ENCODE measurements at regions of chr16 and their contacts with region 1.

Region 1: DNA sequence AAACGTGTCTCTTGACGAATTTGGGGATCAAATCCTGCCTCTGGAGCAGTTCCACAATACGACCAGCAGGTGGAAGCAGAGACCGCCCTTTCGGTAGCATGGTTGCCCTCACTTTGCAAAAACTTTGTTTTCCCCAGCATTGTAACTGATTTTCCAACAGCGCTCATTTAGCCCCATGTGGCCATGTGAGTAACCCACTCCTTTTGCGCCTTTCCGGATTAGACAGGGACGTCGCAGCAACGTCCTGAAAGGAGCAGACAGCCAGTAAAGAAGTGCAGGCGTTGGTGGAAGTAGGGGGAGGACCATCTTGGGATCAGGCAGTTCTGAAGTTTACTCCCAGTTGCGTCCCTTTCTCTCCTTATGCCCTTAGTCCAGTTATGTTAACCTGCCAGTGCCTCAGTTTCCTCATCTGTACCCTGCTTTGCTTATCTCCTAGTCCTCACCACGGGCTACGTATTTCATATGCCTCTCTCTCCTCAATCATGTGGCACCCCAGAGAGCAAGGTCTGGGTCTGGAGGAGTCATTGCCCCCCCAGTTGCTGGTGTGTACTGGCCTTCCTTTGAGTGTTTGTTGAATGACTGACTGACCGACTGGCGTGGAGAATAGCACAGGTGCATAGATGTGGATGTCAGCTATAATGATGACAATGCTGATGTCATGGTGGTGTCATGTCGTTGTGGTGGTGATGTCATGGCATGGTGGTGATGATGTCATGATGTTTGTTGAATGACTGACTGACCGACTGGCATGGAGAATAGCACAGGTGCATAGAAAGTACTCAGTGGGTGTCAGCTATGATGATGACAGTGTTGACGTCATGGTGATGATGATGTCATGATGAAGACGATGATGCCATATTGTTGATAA is 22.3 kb downstream of the TMEM114 start:
- DNase-seq: peak; percentile 49 to 86 (median 73)
- ATAC-seq: peak; percentile 97
- H3K4me3 ChIP-seq: no peak overlapping the region
- H3K4me3 Mint-ChIP-seq: no peak overlapping the region
- H3K27ac ChIP-seq: no peak overlapping the region
- H3K27ac Mint-ChIP-seq: no peak overlapping the region
- H3K4me1 ChIP-seq: no peaks in the 10 kb centered on the region
- H3K4me1 Mint-ChIP-seq: peaks cover 4% of the 10 kb centered on the region
- H3K27me3 ChIP-seq: no peaks in the 10 kb centered on the region
- H3K27me3 Mint-ChIP-seq: peaks cover 10% of the 10 kb centered on the region
- CTCF ChIP-seq: peak; percentile 98

Region 2: GRCh38 chr16:8644211-8645140 is 76.5 kb after region 1 on chr16:
- CTCF ChIA-PET with region 1: interaction called, 4 read pairs
- POLR2A ChIA-PET with region 1: no interaction called
- intact Hi-C with region 1: loop called in 1 of 2 experiments (anchors 5 kb)
- DNase-seq: peak in 7 of 9 experiments; percentile 10 to 58 (median 25)
- ATAC-seq: peak; percentile 76
- H3K4me3 ChIP-seq: no peak overlapping the region
- H3K4me3 Mint-ChIP-seq: peak overlapping the region; percentile 35
- H3K27ac ChIP-seq: peak overlapping the region; percentile 5 to 19
- H3K27ac Mint-ChIP-seq: peak overlapping the region; percentile 84
- H3K4me1 ChIP-seq: peaks cover 8% of the 10 kb centered on the region
- H3K4me1 Mint-ChIP-seq: peaks cover 14% of the 10 kb centered on the region
- H3K27me3 ChIP-seq: no peaks in the 10 kb centered on the region
- H3K27me3 Mint-ChIP-seq: no peaks in the 10 kb centered on the region
- CTCF ChIP-seq: no peak

Region 3: DNA sequence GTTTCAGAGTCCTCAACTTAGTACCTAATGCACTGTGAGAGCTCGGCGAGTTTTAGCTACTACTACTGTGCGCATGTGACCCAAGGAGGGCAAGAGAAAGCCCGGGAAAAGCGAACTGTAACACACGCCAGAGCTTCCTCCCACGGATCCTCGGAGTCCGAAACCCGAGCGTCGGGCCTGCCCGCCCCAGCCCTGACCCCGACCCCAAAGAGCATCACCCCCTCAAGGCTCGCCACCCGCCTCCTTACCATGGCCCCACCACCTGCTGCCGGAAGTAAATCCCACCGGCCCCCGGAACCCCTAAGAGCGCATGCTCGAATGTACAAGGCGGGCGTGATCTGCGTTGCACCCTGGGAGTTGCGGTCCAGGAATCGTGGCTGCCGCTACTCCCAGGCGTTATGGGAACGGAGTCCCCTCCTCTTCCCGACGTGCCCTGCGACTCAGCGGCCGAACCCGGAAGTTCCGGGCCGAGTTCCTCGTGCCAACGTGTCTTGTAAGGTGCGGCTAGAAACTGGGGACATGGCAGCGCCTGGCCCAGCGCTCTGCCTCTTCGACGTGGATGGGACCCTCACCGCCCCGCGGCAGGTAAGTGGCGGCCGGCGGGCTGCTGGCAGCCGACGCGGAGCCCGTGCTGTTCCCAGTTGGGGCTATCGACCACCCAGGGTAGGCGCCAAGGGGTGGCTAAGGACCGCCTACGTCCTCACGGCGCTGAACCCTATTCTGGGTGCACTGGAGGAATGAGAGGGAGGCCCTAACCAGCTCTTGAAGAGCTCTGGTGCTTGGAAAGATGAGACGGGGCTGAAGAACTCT is 229.6 kb after region 1 on chr16 and contains the starts of genes PMM2 and TMEM186:
- CTCF ChIA-PET with region 1: no interaction called
- POLR2A ChIA-PET with region 1: no interaction called
- intact Hi-C with region 1: loop called in 1 of 2 experiments (anchors 5 kb)
- DNase-seq: peak; percentile 87 to 98 (median 95)
- ATAC-seq: peak; percentile 95
- H3K4me3 ChIP-seq: peak within 1 kb of the TSS; percentile 77 to 97
- H3K4me3 Mint-ChIP-seq: peak within 1 kb of the TSS; percentile 95
- H3K27ac ChIP-seq: peak within 1 kb of the TSS; percentile 78 to 81
- H3K27ac Mint-ChIP-seq: peak within 1 kb of the TSS; percentile 93
- H3K4me1 ChIP-seq: peaks cover 34% of the 10 kb centered on the region
- H3K4me1 Mint-ChIP-seq: peaks cover 46% of the 10 kb centered on the region
- H3K27me3 ChIP-seq: no peaks in the 10 kb centered on the region
- H3K27me3 Mint-ChIP-seq: no peaks in the 10 kb centered on the region
- CTCF ChIP-seq: no peak
- total RNA-seq, gene PMM2: 29.6 to 32.7 TPM
- total RNA-seq, gene TMEM186: 2.4 to 2.9 TPM

Region 4: GRCh38 chr16:9134739-9135138 is 566.8 kb after region 1 on chr16:
- CTCF ChIA-PET with region 1: interaction called, 5 read pairs
- POLR2A ChIA-PET with region 1: no interaction called
- intact Hi-C with region 1: loop called (anchors 1 to 2 kb)
- DNase-seq: peak; percentile 32 to 76 (median 64)
- ATAC-seq: peak; percentile 80
- H3K4me3 ChIP-seq: no peak overlapping the region
- H3K4me3 Mint-ChIP-seq: no peak overlapping the region
- H3K27ac ChIP-seq: no peak overlapping the region
- H3K27ac Mint-ChIP-seq: peak overlapping the region; percentile 55
- H3K4me1 ChIP-seq: peaks cover 13% of the 10 kb centered on the region
- H3K4me1 Mint-ChIP-seq: peaks cover 20% of the 10 kb centered on the region
- H3K27me3 ChIP-seq: no peaks in the 10 kb centered on the region
- H3K27me3 Mint-ChIP-seq: no peaks in the 10 kb centered on the region
- CTCF ChIP-seq: peak; percentile 68

Region 5: GRCh38 chr16:10509534-10510025 is 1941.6 kb after region 1 on chr16:
- CTCF ChIA-PET with region 1: no interaction called
- POLR2A ChIA-PET with region 1: no interaction called
- intact Hi-C with region 1: loop called in 1 of 2 experiments (anchors 2 kb)
- DNase-seq: peak; percentile 28 to 85 (median 67)
- ATAC-seq: peak; percentile 87
- H3K4me3 ChIP-seq: no peak overlapping the region
- H3K4me3 Mint-ChIP-seq: no peak overlapping the region
- H3K27ac ChIP-seq: no peak overlapping the region
- H3K27ac Mint-ChIP-seq: no peak overlapping the region
- H3K4me1 ChIP-seq: no peaks in the 10 kb centered on the region
- H3K4me1 Mint-ChIP-seq: peaks cover 2% of the 10 kb centered on the region
- H3K27me3 ChIP-seq: no peaks in the 10 kb centered on the region
- H3K27me3 Mint-ChIP-seq: no peaks in the 10 kb centered on the region
- CTCF ChIP-seq: peak; percentile 75